Common myeloid progenitor, CD34-positive (primary cell): ENCODE measurements at regions of chr2 and their contacts with region 1.

Region 1: DNA sequence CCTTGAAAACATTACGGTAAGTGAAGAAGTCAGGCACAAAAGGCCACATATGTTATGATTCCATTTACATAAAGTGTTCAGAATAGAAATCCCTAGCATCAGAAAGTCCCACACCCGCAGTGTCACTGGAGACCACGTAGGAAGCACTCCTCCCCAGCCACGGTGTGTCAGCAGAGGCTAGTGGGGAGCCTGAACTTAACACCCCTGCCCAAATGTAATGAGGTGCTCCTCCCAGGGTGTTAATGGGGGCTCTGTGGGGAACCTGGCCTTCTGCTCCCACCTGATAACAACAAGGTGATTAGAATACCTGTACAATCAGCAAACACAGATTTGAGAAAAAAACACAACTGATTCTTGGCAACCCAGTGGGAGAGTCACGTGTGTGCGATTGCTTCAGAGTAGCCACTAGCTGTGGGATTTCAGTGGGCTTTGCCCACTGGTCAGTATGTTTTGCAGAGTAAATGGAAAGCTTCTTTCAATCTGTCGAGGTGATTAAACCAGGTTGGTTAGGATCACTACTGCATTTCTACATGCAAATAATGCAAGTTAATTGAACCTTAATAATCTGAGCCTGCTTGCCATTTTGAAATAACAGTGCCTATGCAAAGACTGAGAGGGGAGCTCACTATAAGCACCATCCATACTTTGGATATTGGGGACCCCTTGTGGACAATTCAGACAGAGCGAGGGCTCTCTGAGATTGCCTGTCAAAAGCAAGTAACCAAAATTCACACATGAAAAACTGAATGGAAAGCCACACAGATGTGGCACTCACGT is 20.6 kb upstream of the ATRAID start:
- DNase-seq: peak; percentile 77 to 86 (median 81)
- H3K4me3 ChIP-seq: no peak overlapping the region
- H3K27ac ChIP-seq: no peak overlapping the region
- H3K4me1 ChIP-seq: no peaks in the 10 kb centered on the region
- H3K27me3 ChIP-seq: no peaks in the 10 kb centered on the region

Region 2: GRCh38 chr2:27095745-27096651 is 95.2 kb before region 1 on chr2:
- CTCF ChIA-PET with region 1: interaction called, 97 read pairs
- POLR2A ChIA-PET with region 1: interaction called, 9 read pairs
- DNase-seq: peak in 2 of 3 donors; percentile 66 to 68
- H3K4me3 ChIP-seq: peak overlapping the region in 5 of 7 experiments; percentile 35 to 77 (median 57)
- H3K27ac ChIP-seq: peak overlapping the region in 1 of 2 experiments; percentile 11
- H3K4me1 ChIP-seq: peaks cover 0 to 12% (median 10%) of the 10 kb centered on the region in 4 experiments
- H3K27me3 ChIP-seq: no peaks in the 10 kb centered on the region

Region 3: DNA sequence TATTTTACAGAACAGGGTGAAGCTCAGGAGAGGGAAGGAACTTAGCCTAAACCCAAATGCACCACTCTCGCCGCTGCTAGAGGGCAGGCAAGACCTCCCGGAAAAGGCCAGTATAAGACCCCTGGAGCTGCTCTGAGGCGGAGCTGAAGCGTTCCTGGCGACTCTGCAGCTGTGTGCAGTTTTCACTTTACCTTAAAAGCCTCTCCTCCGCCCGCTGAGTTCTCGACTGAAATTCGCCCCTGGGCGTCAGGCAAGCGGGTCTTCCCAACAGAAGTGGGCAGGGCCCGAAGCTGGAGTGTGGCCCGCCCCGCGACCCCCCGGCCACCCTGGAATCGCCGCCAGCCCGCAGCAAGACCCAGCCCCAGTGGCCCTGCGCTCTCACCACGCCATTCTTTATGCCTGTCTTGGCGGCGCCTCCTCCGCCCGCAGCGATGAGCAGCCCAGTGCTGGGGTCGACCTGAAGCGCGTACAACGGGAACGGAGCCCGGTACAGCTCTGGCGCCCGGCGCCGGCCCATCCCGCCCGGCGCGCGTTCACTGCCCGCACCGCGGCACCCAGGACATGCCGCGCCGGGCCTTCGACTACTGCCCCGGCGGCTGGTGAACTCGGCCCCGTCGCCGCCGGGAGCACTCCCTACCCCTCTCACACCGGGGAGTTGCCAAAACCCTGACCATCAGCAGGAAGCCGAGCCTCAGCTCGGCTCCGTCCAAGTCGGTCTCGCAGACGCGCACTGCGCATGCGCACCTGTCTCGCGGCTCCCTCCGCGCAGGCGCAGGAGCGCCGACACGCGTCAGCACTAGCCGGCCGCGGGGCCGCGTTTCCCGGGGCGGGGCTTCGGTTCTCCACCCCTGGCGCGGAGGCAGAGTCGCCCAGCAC is 57.1 kb before region 1 on chr2 and contains the start of gene PREB:
- CTCF ChIA-PET with region 1: interaction called, 12 read pairs
- POLR2A ChIA-PET with region 1: no interaction called
- DNase-seq: peak; percentile 93 to 96 (median 94)
- H3K4me3 ChIP-seq: peak within 1 kb of the TSS; percentile 58 to 96 (median 90)
- H3K27ac ChIP-seq: peak within 1 kb of the TSS; percentile 75 to 84
- H3K4me1 ChIP-seq: peaks cover 5 to 21% (median 18%) of the 10 kb centered on the region in 4 experiments
- H3K27me3 ChIP-seq: no peaks in the 10 kb centered on the region

Region 4: GRCh38 chr2:27174316-27175040 is 16.8 kb before region 1 on chr2:
- CTCF ChIA-PET with region 1: interaction called, 21 read pairs
- POLR2A ChIA-PET with region 1: no interaction called
- DNase-seq: no peak
- H3K4me3 ChIP-seq: no peak overlapping the region
- H3K27ac ChIP-seq: no peak overlapping the region
- H3K4me1 ChIP-seq: peaks cover 0 to 6% (median 2%) of the 10 kb centered on the region in 4 experiments
- H3K27me3 ChIP-seq: peaks cover 0 to 11% (median 0%) of the 10 kb centered on the region in 5 experiments

Region 5: DNA sequence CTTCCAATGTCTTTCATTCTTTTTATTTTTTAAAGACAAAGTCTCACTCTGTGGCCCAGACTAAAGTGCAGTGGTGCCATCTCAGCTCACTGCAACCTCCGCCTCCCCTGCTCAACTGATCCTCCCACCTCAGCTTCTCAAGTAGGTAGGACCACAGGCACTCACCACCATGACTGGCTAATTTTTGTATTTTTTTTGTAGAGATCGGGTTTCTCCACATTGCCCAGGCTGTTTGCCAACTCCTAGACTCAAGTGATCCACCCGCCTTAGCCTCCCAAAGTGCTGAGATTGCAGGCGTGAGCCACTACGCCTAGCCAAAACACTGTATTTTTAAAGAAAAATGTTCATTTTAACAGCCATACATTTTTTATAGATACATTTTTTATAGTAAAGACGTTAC is 318.1 kb after region 1 on chr2:
- CTCF ChIA-PET with region 1: no interaction called
- POLR2A ChIA-PET with region 1: no interaction called
- DNase-seq: peak in 2 of 3 donors; percentile 55 to 67
- H3K4me3 ChIP-seq: no peak overlapping the region
- H3K27ac ChIP-seq: no peak overlapping the region
- H3K4me1 ChIP-seq: no peaks in the 10 kb centered on the region
- H3K27me3 ChIP-seq: peaks cover 0 to 5% (median 0%) of the 10 kb centered on the region in 5 experiments